ENCODE measurements at regions of chr2 and their contacts with region 1.

Region 1: GRCh38 chr2:8694737-8695136 is 12.9 kb downstream of the ID2 start:
- DNase-seq: no peak
- ATAC-seq: no peak
- H3K4me3 ChIP-seq: no peak overlapping the region
- H3K27ac ChIP-seq: no peak overlapping the region
- H3K4me1 ChIP-seq: no peaks in the 10 kb centered on the region
- H3K27me3 ChIP-seq: no peaks in the 10 kb centered on the region

Region 2: GRCh38 chr2:8756716-8757115 is 62.0 kb after region 1 on chr2:
- intact Hi-C with region 1: loop called in 1 of 4 experiments (anchors 5 kb)
- DNase-seq: no peak
- ATAC-seq: no peak
- H3K4me3 ChIP-seq: no peak overlapping the region
- H3K27ac ChIP-seq: no peak overlapping the region
- H3K4me1 ChIP-seq: no peaks in the 10 kb centered on the region
- H3K27me3 ChIP-seq: no peaks in the 10 kb centered on the region